HepG2 (cell line): ENCODE measurements at regions of chr3 and their contacts with region 1.

Region 1: GRCh38 chr3:130276203-130276803 is 69.2 kb upstream of the COL6A5 start:
- DNase-seq: peak; percentile 24
- ATAC-seq: peak; percentile 75
- H3K4me3 ChIP-seq: no peak overlapping the region
- H3K27ac ChIP-seq: no peak overlapping the region
- H3K4me1 ChIP-seq: no peaks in the 10 kb centered on the region
- H3K27me3 ChIP-seq: peaks cover 0 to 2% of the 10 kb centered on the region in 2 experiments; a peak in 1 of 5 replicates
- CTCF ChIP-seq: peak; percentile 79
- EP300 ChIP-seq: no peak
- POLR2A ChIP-seq: no peak
- RAD21 ChIP-seq: peak; percentile 61

Region 2: GRCh38 chr3:130227540-130227939 is 48.8 kb before region 1 on chr3:
- CTCF ChIA-PET with region 1: no interaction called
- POLR2A ChIA-PET with region 1: no interaction called
- in situ Hi-C with region 1: no loop called
- intact Hi-C with region 1: no loop called
- DNase-seq: no peak
- ATAC-seq: no peak
- H3K4me3 ChIP-seq: no peak overlapping the region
- H3K27ac ChIP-seq: no peak overlapping the region
- H3K4me1 ChIP-seq: no peaks in the 10 kb centered on the region
- H3K27me3 ChIP-seq: no peaks in the 10 kb centered on the region
- CTCF ChIP-seq: no peak
- EP300 ChIP-seq: no peak
- POLR2A ChIP-seq: no peak
- RAD21 ChIP-seq: no peak

Region 3: DNA sequence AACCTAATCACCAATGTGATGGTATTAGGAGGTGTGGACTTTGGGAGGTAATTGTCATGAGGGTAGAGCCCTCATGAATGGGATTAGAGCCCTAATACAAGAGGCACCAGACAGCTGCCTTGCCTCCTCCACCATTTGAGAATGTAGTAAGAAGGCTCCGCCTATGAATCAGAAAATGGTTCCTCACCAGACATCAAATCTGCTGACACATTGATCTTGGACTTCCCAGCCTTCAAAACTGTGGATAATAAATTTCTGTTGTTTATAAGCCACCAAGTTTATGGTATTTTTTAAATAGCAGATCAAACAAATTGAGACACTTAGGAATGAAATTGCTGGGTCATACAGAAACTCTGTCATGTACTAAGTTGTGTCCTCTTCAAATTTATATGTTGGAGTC is 12.4 kb after region 1 on chr3:
- CTCF ChIA-PET with region 1: no interaction called
- POLR2A ChIA-PET with region 1: no interaction called
- in situ Hi-C with region 1: no loop called
- intact Hi-C with region 1: no loop called
- DNase-seq: no peak
- ATAC-seq: no peak
- H3K4me3 ChIP-seq: no peak overlapping the region
- H3K27ac ChIP-seq: no peak overlapping the region
- H3K4me1 ChIP-seq: no peaks in the 10 kb centered on the region
- H3K27me3 ChIP-seq: no peaks in the 10 kb centered on the region
- CTCF ChIP-seq: no peak
- EP300 ChIP-seq: no peak
- POLR2A ChIP-seq: no peak
- RAD21 ChIP-seq: no peak

Region 4: DNA sequence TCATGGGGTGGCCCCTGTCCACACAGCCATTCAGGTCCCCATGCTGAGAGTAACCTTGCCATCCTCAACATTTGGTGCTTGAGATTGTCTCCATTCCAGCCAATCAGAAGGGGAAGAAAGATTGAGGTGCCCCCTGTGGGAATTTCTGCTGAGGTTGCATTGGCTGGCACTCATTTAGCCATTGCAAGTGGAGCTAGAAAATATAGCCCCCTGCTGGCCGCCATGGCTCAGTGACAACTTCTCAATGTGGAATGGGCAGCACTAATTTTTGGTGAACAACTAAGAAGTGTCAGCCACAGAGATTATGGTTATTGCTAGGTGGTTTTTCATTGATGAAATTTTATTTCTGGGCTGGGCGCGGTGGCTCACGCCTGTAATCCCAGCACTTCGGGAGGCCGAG is 262.7 kb after region 1 on chr3:
- CTCF ChIA-PET with region 1: interaction called, 25 read pairs
- POLR2A ChIA-PET with region 1: no interaction called
- in situ Hi-C with region 1: loop called (anchors 5 kb)
- intact Hi-C with region 1: no loop called
- DNase-seq: peak; percentile 55
- ATAC-seq: peak; percentile 89
- H3K4me3 ChIP-seq: no peak overlapping the region
- H3K27ac ChIP-seq: no peak overlapping the region
- H3K4me1 ChIP-seq: no peaks in the 10 kb centered on the region
- H3K27me3 ChIP-seq: no peaks in the 10 kb centered on the region
- CTCF ChIP-seq: peak; percentile 70
- EP300 ChIP-seq: no peak
- POLR2A ChIP-seq: no peak
- RAD21 ChIP-seq: 0 out of 2 replicates have a peak, but pooled peaks have one; percentile 43